Panc1 (cell line): ENCODE measurements at regions of chr1 and their contacts with region 1.

Region 1: GRCh38 chr1:153572569-153573015 is 6.9 kb upstream of the S100A2 start:
- DNase-seq: peak; percentile 83
- ATAC-seq: peak; percentile 84
- H3K4me3 ChIP-seq: no peak overlapping the region
- H3K27ac ChIP-seq: peak overlapping the region; percentile 63; the same call in 1 of the 2 replicates
- H3K4me1 ChIP-seq: peaks cover 15% of the 10 kb centered on the region
- H3K27me3 ChIP-seq: no peaks in the 10 kb centered on the region
- CTCF ChIP-seq: peak; percentile 97

Region 2: GRCh38 chr1:153494976-153495535 is 77.5 kb before region 1 on chr1:
- CTCF ChIA-PET with region 1: no interaction called
- POLR2A ChIA-PET with region 1: interaction called, 10 read pairs
- in situ Hi-C with region 1: no loop called
- intact Hi-C with region 1: no loop called
- DNase-seq: no peak
- ATAC-seq: peak; percentile 83
- H3K4me3 ChIP-seq: no peak overlapping the region
- H3K27ac ChIP-seq: peak overlapping the region; percentile 25; the same call in 1 of the 2 replicates
- H3K4me1 ChIP-seq: peaks cover 13% of the 10 kb centered on the region
- H3K27me3 ChIP-seq: no peaks in the 10 kb centered on the region
- CTCF ChIP-seq: peak; percentile 94

Region 3: DNA sequence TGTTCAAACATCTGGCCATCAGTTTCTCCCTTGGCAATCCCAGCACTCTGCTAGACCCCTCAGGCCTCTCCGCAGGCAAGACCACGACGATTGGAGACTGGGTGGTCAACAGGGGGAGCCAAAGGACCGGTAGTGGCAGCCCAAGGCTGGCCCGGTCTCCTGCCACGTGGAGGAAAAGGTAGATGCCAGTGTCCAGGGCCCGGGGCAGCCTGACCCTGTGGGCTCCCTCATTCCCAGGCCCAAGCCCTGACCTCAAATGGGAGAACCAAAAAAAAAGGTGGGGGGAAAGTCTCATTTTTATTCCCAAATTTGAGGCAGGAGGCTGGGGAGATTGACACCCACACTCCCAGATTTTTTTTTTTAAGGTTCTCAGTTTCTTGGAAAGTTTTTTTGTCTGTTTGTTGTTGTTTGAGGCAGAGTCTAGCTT is 61.6 kb before region 1 on chr1:
- CTCF ChIA-PET with region 1: interaction called, 16 read pairs
- POLR2A ChIA-PET with region 1: no interaction called
- in situ Hi-C with region 1: no loop called
- intact Hi-C with region 1: loop called (anchors 1 kb)
- DNase-seq: peak; percentile 65
- ATAC-seq: peak; percentile 87
- H3K4me3 ChIP-seq: no peak overlapping the region
- H3K27ac ChIP-seq: peak overlapping the region; percentile 79
- H3K4me1 ChIP-seq: peaks cover 47% of the 10 kb centered on the region
- H3K27me3 ChIP-seq: no peaks in the 10 kb centered on the region
- CTCF ChIP-seq: peak; percentile 96

Region 4: GRCh38 chr1:153532769-153533599 is 39.6 kb before region 1 on chr1:
- CTCF ChIA-PET with region 1: interaction called, 16 read pairs
- POLR2A ChIA-PET with region 1: interaction called, 6 read pairs
- in situ Hi-C with region 1: no loop called
- intact Hi-C with region 1: loop called (anchors 1 kb)
- DNase-seq: no peak
- ATAC-seq: peak; percentile 61
- H3K4me3 ChIP-seq: peak overlapping the region; percentile 75 to 86
- H3K27ac ChIP-seq: peak overlapping the region; percentile 91
- H3K4me1 ChIP-seq: peaks cover 36% of the 10 kb centered on the region
- H3K27me3 ChIP-seq: no peaks in the 10 kb centered on the region
- CTCF ChIP-seq: peak; percentile 96

Region 5: DNA sequence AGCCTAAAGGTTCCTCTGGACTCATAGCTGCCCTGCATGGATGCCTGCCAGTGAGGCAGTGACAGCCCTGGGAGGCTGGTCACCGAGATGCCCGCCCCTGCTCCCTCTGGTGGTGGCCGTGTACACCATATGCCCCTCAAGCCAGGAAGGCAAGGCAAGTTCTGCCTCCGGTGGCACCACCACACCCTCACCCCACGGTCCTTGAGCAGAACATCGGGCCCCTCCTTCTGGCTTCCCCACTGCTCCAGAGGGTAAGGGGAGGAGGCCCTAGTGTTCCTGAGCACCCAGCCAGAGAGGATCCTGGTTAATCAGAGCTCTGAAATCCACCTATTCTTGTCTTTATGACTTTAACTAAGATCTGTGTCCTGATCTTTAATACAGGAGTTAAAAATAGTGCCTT is 45.1 kb after region 1 on chr1:
- CTCF ChIA-PET with region 1: interaction called, 13 read pairs
- POLR2A ChIA-PET with region 1: interaction called, 4 read pairs
- in situ Hi-C with region 1: no loop called
- intact Hi-C with region 1: loop called (anchors 2 kb)
- DNase-seq: no peak
- ATAC-seq: peak; percentile 83
- H3K4me3 ChIP-seq: no peak overlapping the region
- H3K27ac ChIP-seq: peak overlapping the region; percentile 66
- H3K4me1 ChIP-seq: peaks cover 9% of the 10 kb centered on the region
- H3K27me3 ChIP-seq: no peaks in the 10 kb centered on the region
- CTCF ChIP-seq: peak; percentile 56

Region 6: DNA sequence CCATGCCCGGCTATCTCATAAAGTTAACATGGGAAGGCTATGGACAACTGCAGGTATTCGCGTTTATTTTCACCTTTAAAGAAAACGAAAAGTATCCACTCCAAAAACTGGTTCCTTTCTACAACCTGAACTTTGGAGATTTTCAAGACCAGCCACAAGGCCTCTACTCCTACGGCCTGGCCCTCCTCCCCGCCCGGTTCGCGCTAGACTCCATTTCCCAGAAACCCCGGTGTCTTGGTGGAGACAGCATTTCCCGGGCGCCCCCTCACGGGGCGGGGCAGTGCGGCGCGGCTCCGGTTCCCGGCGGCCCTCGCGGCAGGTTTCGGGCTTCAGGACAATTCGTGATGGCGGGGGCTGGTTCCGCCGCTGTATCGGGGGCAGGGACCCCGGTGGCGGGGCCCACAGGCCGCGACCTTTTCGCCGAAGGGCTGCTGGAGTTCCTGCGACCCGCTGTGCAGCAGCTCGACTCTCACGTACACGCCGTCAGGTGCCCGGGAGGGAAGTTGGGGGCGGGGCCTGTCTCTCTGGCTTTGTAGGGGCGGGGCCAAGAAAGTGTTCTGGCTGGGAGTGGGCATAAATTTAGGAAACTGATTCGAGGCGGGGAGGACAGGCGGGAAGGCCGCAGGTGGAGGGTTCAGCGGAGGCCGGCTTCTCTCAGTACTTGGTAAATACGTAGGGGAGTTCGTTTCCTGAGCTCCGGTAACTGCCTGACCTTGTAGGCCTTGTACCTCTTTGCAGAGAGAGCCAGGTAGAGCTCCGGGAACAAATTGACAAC is 86.0 kb after region 1 on chr1 and contains the start of gene SNAPIN:
- CTCF ChIA-PET with region 1: no interaction called
- POLR2A ChIA-PET with region 1: no interaction called
- in situ Hi-C with region 1: no loop called
- intact Hi-C with region 1: loop called (anchors 10 kb)
- DNase-seq: peak; percentile 51
- ATAC-seq: peak; percentile 99
- H3K4me3 ChIP-seq: peak within 1 kb of the TSS; percentile 69 to 84
- H3K27ac ChIP-seq: peak within 1 kb of the TSS; percentile 88
- H3K4me1 ChIP-seq: peaks cover 11% of the 10 kb centered on the region; the same call in 1 of the 2 replicates
- H3K27me3 ChIP-seq: no peaks in the 10 kb centered on the region
- CTCF ChIP-seq: no peak
- total RNA-seq, gene SNAPIN: 46.8 TPM

Region 7: GRCh38 chr1:153754266-153754665 is 181.7 kb after region 1 on chr1:
- CTCF ChIA-PET with region 1: no interaction called
- POLR2A ChIA-PET with region 1: no interaction called
- in situ Hi-C with region 1: no loop called
- intact Hi-C with region 1: no loop called
- DNase-seq: no peak
- ATAC-seq: no peak
- H3K4me3 ChIP-seq: no peak overlapping the region
- H3K27ac ChIP-seq: no peak overlapping the region
- H3K4me1 ChIP-seq: no peaks in the 10 kb centered on the region
- H3K27me3 ChIP-seq: no peaks in the 10 kb centered on the region
- CTCF ChIP-seq: no peak